Activated CD8-positive, alpha-beta T cell treated with anti-CD3 and anti-CD28 coated beads, Interleukin-2, amount 10 ng/mL, durations not matched to agents 7 days and 5 days (primary cell): ENCODE measurements at regions of chr7 and their contacts with region 1.

Region 1: DNA sequence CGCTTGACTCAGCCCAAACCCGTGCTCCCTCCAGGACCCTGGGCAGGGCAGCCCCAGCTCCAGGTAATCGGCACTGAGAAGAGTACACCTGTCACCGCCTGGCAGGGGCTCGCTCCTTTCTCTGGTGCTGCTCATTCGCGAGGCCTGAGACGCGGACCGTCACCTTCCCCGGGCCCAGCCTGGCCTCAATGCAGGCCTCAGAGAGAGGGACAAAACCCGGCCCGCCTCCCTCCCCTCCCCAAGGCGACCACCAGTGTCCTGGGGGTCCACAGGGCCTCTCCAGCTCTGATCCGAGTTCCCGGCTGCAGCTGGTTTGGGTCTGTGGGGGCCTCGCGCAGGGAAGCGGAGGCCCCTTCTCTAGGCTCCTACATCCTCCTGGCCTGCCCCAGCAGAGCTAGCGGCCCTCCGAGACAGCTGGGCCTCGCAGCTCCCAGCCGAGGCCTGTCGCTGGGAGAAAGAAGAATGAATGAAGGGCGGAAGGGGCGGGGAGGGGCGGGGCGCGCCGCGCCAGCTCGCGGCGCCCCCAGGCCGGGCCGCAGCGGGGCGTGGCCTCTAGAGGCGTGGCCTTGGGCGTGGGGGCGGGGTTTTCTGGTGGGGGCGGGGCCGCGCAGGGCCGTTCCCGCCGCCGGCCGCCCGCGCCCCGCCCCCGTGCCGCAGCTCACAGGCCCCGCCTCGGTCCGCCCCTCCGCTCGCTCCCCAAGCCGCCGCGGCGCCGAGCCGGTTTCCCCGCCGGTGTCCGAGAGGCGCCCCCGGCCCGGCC is at the start of gene LIMK1:
- DNase-seq: peak; percentile 86
- ATAC-seq: peak; percentile 89
- H3K4me3 Mint-ChIP-seq: peak within 1 kb of the TSS; percentile 80
- H3K27ac Mint-ChIP-seq: peak within 1 kb of the TSS; percentile 85
- H3K4me1 Mint-ChIP-seq: peaks cover 16% of the 10 kb centered on the region
- H3K27me3 Mint-ChIP-seq: no peaks in the 10 kb centered on the region
- total RNA-seq, gene LIMK1: 33.5 to 37.6 TPM

Region 2: GRCh38 chr7:74026903-74027551 is 56.3 kb before region 1 on chr7:
- CTCF ChIA-PET with region 1: no interaction called
- POLR2A ChIA-PET with region 1: no interaction called
- DNase-seq: peak; percentile 73
- ATAC-seq: peak; percentile 73
- H3K4me3 Mint-ChIP-seq: no peak overlapping the region
- H3K27ac Mint-ChIP-seq: no peak overlapping the region
- H3K4me1 Mint-ChIP-seq: no peaks in the 10 kb centered on the region
- H3K27me3 Mint-ChIP-seq: peaks cover 45% of the 10 kb centered on the region

Region 3: GRCh38 chr7:74094224-74095101 is 11.2 kb after region 1 on chr7:
- CTCF ChIA-PET with region 1: interaction called, 4 read pairs
- POLR2A ChIA-PET with region 1: interaction called, 44 read pairs
- DNase-seq: peak; percentile 88
- ATAC-seq: peak; percentile 80
- H3K4me3 Mint-ChIP-seq: peak overlapping the region; percentile 87
- H3K27ac Mint-ChIP-seq: peak overlapping the region; percentile 91
- H3K4me1 Mint-ChIP-seq: peaks cover 39% of the 10 kb centered on the region
- H3K27me3 Mint-ChIP-seq: no peaks in the 10 kb centered on the region

Region 4: GRCh38 chr7:74173866-74174605 is 90.7 kb after region 1 on chr7 and contains the start of gene EIF4H:
- CTCF ChIA-PET with region 1: interaction called, 3 read pairs
- POLR2A ChIA-PET with region 1: interaction called, 26 read pairs
- DNase-seq: peak; percentile 95
- ATAC-seq: peak; percentile 87
- H3K4me3 Mint-ChIP-seq: peak within 1 kb of the TSS; percentile 87
- H3K27ac Mint-ChIP-seq: peak within 1 kb of the TSS; percentile 90
- H3K4me1 Mint-ChIP-seq: peaks cover 35% of the 10 kb centered on the region
- H3K27me3 Mint-ChIP-seq: no peaks in the 10 kb centered on the region
- total RNA-seq, gene EIF4H: 287 to 302 TPM